HEK293 (cell line): ENCODE measurements at regions of chr18 and their contacts with region 1.

Region 1: GRCh38 chr18:8389391-8390340 is 219.6 kb upstream of the RAB12 start:
- H3K4me3 ChIP-seq: no peak overlapping the region
- H3K27ac ChIP-seq: no peak overlapping the region
- H3K4me1 ChIP-seq: no peaks in the 10 kb centered on the region
- CTCF ChIP-seq: peak; percentile 42; the same call in 1 of the 2 replicates

Region 2: DNA sequence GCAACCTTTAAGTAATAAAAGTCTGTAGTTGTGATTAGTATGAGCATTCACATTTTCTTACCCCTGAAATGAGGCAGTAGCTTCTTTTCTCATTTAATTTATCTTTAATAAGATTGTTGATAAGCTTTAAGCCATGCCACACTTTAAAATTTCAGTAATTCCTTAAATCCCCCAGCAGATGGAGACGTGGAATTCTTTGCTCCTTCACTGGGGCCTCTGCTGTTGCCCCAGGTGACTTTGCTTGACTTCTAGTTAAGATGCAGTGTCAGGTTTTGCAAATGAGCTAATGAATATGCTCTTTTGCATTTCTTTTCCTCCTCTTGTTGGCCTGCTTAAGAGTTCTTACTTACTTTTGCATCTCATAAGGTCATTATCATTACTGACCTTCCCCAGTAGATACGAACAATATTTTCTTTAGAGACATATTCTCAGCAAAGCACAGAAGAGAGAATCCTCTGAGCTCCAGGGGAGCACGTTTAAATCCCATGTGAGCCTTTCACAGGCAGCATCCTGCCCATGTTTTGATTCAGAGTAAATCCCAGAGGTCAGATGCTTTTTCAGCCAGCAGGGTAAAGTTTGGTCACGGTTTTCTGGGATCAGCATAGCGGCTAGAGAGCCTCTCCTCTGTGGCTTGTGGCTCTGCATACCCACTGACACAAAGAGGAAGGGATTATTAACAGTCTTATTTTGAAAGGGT is 599.7 kb before region 1 on chr18:
- CTCF ChIA-PET with region 1: interaction called, 19 read pairs
- POLR2A ChIA-PET with region 1: no interaction called
- H3K4me3 ChIP-seq: no peak overlapping the region
- H3K27ac ChIP-seq: no peak overlapping the region
- H3K4me1 ChIP-seq: peaks cover 7% of the 10 kb centered on the region
- CTCF ChIP-seq: peak; percentile 11; the same call in 1 of the 2 replicates

Region 3: GRCh38 chr18:8084160-8084559 is 305.5 kb before region 1 on chr18:
- CTCF ChIA-PET with region 1: interaction called, 16 read pairs
- POLR2A ChIA-PET with region 1: no interaction called
- H3K4me3 ChIP-seq: no peak overlapping the region
- H3K27ac ChIP-seq: no peak overlapping the region
- H3K4me1 ChIP-seq: no peaks in the 10 kb centered on the region; the same call in 1 of the 2 replicates
- CTCF ChIP-seq: no peak

Region 4: DNA sequence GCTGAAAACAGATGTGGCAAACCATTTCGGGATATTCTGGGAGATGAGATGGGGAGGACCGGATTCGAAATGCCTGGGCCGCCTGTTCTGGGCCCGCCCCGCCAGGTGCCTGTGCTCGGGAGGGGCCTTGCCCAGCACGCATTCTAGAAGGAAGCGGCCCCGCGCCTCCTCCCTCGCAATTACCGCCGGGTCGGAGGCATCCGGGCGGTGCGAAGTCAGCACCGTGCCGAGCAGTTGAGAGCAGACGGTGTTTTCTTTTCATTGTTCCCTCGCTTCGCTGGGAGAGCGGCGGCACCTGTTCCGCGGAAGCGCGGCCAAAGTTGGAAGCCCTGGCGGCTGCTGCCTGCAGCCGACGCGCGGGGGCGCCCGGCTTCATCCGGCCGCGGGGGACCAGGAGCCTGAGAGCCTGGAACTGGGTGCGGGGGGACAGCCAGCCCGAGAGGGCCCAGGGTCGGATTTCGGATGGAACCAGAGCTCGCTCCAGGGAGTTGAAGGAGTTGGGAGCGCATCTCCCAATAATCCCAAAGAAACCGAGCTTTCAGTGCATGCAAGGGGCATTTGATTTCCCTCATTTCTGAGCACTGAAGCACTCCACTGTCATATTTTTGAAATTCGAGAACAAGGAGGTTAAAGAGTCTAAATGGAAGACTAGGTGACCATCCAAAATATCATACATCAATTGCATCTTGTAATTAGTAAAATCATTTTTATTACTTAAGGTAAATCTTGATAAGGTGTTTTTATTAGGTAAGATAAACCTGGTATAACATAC is 22.3 kb before region 1 on chr18:
- CTCF ChIA-PET with region 1: interaction called, 16 read pairs
- POLR2A ChIA-PET with region 1: no interaction called
- H3K4me3 ChIP-seq: peak overlapping the region; percentile 9
- H3K27ac ChIP-seq: 0 out of 2 replicates have a peak overlapping the region, but pooled peaks have one; percentile 31
- H3K4me1 ChIP-seq: peaks cover 6% of the 10 kb centered on the region; the same call in 1 of the 2 replicates
- CTCF ChIP-seq: peak; percentile 78

Region 5: DNA sequence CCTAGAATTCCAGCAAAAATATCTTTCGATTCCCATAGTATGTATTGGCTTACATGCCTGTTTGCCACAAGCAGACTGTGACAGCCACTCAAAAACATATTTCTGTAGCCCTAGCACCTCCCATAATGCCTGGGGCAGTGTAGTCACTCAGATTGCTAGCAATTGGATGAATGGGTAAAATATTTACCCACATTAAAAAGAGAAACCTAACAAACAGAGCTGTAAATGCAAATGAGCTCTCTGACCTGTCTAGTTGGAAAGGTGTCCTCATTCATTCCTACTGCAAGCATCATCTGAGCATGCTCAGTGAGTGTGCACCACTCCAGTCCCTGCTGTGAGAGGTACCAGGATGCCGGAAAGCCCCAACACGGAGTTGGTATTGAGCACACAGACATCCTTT is 14.4 kb before region 1 on chr18:
- CTCF ChIA-PET with region 1: interaction called, 22 read pairs
- POLR2A ChIA-PET with region 1: no interaction called
- H3K4me3 ChIP-seq: no peak overlapping the region
- H3K27ac ChIP-seq: no peak overlapping the region
- H3K4me1 ChIP-seq: peaks cover 11% of the 10 kb centered on the region
- CTCF ChIP-seq: no peak

Region 6: DNA sequence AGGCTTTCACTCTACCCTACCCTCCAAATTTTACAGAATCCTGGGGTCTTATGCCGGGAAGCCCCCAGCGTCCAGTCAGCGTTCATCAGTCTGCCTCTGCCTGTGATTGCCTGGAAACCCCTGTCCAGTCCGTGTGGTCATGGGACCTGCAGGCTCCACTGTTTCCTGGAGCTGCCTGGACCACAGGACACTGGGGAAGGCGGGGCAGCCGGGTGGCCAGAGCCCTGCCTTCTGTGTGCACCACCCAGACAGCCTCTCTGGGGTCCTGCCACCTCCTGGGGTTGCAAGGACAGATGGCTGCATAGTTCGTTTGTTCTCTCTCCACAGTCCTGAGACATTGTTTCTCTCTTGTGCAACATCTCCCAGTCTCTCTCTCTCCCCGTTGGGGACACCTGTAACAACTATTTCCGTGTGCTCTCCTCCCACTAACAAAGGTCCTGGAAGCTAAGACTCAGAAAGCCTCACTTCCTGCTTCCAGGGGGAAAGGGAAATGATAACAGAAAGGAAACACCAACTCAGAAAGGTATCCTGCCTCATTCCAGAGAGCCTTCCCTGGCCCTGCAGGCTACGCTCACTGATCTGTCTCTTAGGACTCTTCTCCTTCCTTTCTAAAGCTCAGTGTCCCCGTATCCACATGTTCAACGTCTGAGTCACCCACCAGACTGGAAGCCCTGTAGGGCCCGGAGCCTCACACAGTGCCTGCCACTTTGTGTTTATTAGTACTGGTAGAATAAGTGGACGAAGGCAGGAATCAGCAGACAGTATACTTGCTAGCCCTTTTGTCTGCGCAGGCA is 26.7 kb after region 1 on chr18:
- CTCF ChIA-PET with region 1: interaction called, 12 read pairs
- POLR2A ChIA-PET with region 1: no interaction called
- H3K4me3 ChIP-seq: no peak overlapping the region
- H3K27ac ChIP-seq: no peak overlapping the region
- H3K4me1 ChIP-seq: no peaks in the 10 kb centered on the region
- CTCF ChIP-seq: no peak